ENCODE measurements at regions of chr20 and their contacts with region 1.

Region 1: GRCh38 chr20:13302647-13303450 is 81.8 kb downstream of the ISM1 start:
- DNase-seq: peak; percentile 57
- H3K4me3 Mint-ChIP-seq: no peak overlapping the region
- H3K27ac Mint-ChIP-seq: no peak overlapping the region
- H3K4me1 Mint-ChIP-seq: no peaks in the 10 kb centered on the region
- H3K27me3 Mint-ChIP-seq: no peaks in the 10 kb centered on the region

Region 2: DNA sequence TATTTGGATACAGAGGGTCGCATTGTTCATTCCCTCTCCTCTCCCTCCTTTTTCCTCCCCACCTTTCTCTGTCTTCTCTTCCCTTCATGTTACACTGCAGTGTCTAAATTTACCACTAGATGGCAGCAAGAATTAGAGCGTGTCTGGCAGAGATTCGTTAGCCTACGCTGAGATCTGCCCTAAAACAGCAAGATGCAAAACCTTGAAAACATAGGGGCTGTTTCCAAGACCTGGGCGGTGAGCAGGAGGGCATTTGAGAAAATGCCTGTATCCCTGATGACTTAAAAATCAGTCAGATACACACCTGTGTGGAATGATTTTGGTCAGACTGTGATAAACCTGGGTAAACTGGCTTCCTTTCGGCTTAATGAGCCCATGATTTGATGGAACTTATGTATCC is 183.3 kb before region 1 on chr20:
- CTCF ChIA-PET with region 1: interaction called, 53 read pairs
- POLR2A ChIA-PET with region 1: no interaction called
- intact Hi-C with region 1: loop called (anchors 1 kb)
- DNase-seq: peak; percentile 39
- H3K4me3 Mint-ChIP-seq: no peak overlapping the region
- H3K27ac Mint-ChIP-seq: no peak overlapping the region
- H3K4me1 Mint-ChIP-seq: no peaks in the 10 kb centered on the region
- H3K27me3 Mint-ChIP-seq: peaks cover 1% of the 10 kb centered on the region

Region 3: DNA sequence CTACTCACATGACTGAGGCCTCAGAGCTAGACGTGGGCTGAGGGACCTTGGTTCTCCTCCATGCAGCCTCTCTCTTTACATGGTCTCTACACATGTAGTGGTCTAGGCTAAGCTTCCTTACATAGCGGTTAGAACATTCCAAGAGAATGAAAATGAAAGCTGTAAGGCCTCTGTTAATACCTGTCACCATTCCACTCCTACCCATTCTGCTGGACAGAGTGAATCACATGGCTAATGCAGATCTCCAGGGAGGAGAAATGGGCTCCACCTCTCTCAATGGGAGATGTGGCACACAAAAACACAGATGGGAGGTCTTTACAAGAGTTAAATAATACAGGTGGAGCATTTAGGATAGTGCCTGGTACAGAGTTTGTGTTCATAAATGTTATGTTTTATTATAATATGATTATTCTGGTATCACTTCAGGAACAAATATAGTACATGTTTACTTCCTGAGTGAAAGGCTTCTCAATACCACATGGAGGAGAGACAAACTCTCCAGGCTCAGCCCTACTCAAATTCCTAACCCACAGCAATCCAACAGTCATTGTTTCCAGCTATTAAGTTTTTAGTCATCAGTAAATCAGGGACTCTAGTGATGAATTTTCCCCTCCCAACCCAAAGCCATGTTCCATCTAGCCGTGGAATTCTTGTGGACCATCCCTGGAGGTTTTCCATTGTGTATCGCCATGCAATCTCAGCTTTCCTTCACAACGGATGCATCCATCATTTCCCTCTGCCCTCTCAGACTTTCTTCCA is 23.9 kb before region 1 on chr20:
- CTCF ChIA-PET with region 1: no interaction called
- POLR2A ChIA-PET with region 1: no interaction called
- intact Hi-C with region 1: no loop called
- DNase-seq: no peak
- H3K4me3 Mint-ChIP-seq: no peak overlapping the region
- H3K27ac Mint-ChIP-seq: no peak overlapping the region
- H3K4me1 Mint-ChIP-seq: no peaks in the 10 kb centered on the region
- H3K27me3 Mint-ChIP-seq: no peaks in the 10 kb centered on the region